B cell (primary cell): ENCODE measurements at regions of chr12 and their contacts with region 1.

Region 1: GRCh38 chr12:123713398-123713797 is 1.2 kb downstream of the ATP6V0A2 start:
- DNase-seq: peak; percentile 33
- ATAC-seq: no peak
- H3K4me3 ChIP-seq: peak overlapping the region in 4 of 5 experiments; percentile 60 to 83 (median 79)
- H3K4me3 Mint-ChIP-seq: peak overlapping the region; percentile 86
- H3K27ac ChIP-seq: peak overlapping the region in 1 of 2 donors; percentile 58
- H3K27ac Mint-ChIP-seq: peak overlapping the region; percentile 88
- H3K4me1 ChIP-seq: peaks cover 23 to 24% of the 10 kb centered on the region in 2 donors
- H3K4me1 Mint-ChIP-seq: peaks cover 35% of the 10 kb centered on the region
- H3K27me3 ChIP-seq: no peaks in the 10 kb centered on the region
- H3K27me3 Mint-ChIP-seq: no peaks in the 10 kb centered on the region
- CTCF ChIP-seq: no peak

Region 2: GRCh38 chr12:123645878-123646277 is 67.5 kb before region 1 on chr12:
- CTCF ChIA-PET with region 1: no interaction called
- POLR2A ChIA-PET with region 1: no interaction called
- intact Hi-C with region 1: no loop called
- DNase-seq: no peak
- ATAC-seq: no peak
- H3K4me3 ChIP-seq: no peak overlapping the region
- H3K4me3 Mint-ChIP-seq: no peak overlapping the region
- H3K27ac ChIP-seq: no peak overlapping the region
- H3K27ac Mint-ChIP-seq: no peak overlapping the region
- H3K4me1 ChIP-seq: no peaks in the 10 kb centered on the region
- H3K4me1 Mint-ChIP-seq: no peaks in the 10 kb centered on the region
- H3K27me3 ChIP-seq: no peaks in the 10 kb centered on the region
- H3K27me3 Mint-ChIP-seq: no peaks in the 10 kb centered on the region
- CTCF ChIP-seq: no peak

Region 3: DNA sequence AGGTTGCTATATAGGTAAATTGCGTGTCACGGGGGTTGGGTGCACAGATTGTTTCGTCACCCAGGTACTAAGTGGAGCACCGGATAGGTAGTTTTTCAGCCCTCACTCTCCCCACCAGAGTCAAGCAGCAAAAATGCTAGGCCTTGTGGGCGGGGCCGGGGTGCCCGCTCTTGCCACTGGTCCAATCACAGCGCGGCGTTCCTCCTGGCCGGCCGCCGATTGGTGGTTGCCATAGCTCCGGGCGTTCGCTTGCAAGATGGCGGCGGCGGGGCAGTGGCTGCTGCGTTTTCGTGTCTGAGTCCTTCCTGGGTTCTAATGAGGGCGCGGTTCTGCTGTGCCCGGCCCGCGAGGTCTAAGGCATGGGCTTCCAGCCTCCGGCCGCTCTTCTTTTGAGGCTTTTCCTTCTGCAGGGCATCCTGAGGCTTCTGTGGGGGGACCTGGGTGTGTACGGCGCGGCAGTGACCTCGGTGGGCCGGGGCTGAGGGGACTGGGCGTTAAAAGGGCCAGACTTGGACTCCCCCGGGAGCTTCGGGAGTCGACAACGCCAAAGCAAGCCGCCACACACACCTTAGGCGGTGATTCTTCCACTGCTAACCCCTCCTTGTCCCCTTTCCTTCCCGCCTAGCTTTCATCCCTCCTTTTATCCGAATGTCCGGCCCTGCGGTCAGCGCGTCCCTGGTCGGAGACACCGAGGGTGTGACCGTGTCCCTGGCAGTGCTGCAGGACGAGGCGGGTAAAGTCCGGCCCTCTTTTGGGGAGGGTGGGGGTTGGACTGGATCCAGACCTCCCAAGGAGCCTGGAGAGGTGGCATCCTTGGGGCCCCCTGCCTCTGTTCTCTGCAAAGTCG is 42.3 kb before region 1 on chr12 and contains the start of gene TCTN2:
- CTCF ChIA-PET with region 1: no interaction called
- POLR2A ChIA-PET with region 1: interaction called, 7 read pairs
- intact Hi-C with region 1: loop called (anchors 1 kb)
- DNase-seq: peak; percentile 92
- ATAC-seq: peak; percentile 100
- H3K4me3 ChIP-seq: peak within 1 kb of the TSS; percentile 45 to 83 (median 80)
- H3K4me3 Mint-ChIP-seq: peak within 1 kb of the TSS; percentile 89
- H3K27ac ChIP-seq: peak within 1 kb of the TSS in 1 of 2 donors; percentile 62
- H3K27ac Mint-ChIP-seq: peak within 1 kb of the TSS; percentile 63
- H3K4me1 ChIP-seq: peaks cover 9 to 14% of the 10 kb centered on the region in 2 donors
- H3K4me1 Mint-ChIP-seq: peaks cover 14% of the 10 kb centered on the region
- H3K27me3 ChIP-seq: no peaks in the 10 kb centered on the region
- H3K27me3 Mint-ChIP-seq: no peaks in the 10 kb centered on the region
- CTCF ChIP-seq: no peak
- total RNA-seq, gene TCTN2: 21.9 and 22.8 TPM in 2 replicates

Region 4: GRCh38 chr12:123761841-123762714 is 48.7 kb after region 1 on chr12 and contains the start of gene DNAH10:
- CTCF ChIA-PET with region 1: no interaction called
- POLR2A ChIA-PET with region 1: no interaction called
- intact Hi-C with region 1: loop called (anchors 2 kb)
- DNase-seq: peak; percentile 72
- ATAC-seq: peak; percentile 79
- H3K4me3 ChIP-seq: peak within 1 kb of the TSS; percentile 26 to 73 (median 63)
- H3K4me3 Mint-ChIP-seq: peak within 1 kb of the TSS; percentile 94
- H3K27ac ChIP-seq: no peak within 1 kb of the TSS
- H3K27ac Mint-ChIP-seq: peak within 1 kb of the TSS; percentile 81
- H3K4me1 ChIP-seq: peaks cover 9 to 12% of the 10 kb centered on the region in 2 donors
- H3K4me1 Mint-ChIP-seq: peaks cover 9% of the 10 kb centered on the region
- H3K27me3 ChIP-seq: no peaks in the 10 kb centered on the region
- H3K27me3 Mint-ChIP-seq: no peaks in the 10 kb centered on the region
- CTCF ChIP-seq: peak; percentile 66
- total RNA-seq, gene DNAH10: 0.66 and 0.99 TPM in 2 replicates